AG04449 (cell line): ENCODE measurements at regions of chr5 and their contacts with region 1.

Region 1: DNA sequence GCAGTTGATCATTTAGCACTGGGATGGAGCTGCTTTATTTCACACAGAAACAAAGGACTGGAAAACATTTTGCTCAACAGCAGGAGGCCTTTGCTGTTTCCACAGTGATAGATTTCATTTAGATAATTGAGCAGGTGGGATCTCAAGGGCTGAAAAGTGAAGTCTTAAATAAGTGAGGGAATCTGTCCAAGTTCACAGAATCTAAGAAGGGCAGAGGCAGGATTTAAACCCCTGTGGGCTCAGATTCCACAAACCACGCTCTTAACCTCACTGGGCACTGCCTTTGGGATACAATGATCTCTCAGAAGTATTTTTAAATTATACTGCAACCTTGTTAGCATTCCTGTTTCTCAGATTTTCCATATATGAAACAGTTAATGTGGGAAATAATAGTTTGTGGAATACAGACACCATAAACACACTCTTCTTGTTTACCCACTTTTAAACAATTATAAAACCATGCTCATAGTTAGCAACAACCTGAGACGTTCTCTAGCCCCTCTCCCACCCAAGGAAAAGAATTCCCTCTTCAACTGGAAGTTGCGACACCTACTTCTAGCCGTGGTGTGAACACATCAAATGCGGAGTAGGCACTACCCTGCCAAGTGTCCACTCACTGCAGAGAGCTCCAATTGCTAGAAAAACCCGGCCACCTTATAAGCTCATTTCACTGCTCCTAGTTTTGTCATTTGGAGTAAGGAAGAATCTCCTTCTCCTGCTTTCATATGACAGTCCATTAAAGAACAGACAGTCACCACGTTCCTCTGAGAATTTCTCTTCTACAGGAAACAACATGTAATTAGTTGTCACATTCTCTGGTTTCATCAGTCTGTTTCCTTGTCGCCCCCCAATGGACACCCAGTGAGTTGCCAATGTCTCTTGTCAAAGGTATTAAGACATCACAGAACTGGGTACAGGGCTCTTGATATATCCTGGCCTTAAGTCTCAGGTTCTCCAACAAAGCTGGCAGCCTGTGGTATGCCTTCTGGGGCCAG is 47.4 kb downstream of the PRLR start:
- DNase-seq: no peak
- H3K4me3 ChIP-seq: no peak overlapping the region
- CTCF ChIP-seq: peak; percentile 64

Region 2: DNA sequence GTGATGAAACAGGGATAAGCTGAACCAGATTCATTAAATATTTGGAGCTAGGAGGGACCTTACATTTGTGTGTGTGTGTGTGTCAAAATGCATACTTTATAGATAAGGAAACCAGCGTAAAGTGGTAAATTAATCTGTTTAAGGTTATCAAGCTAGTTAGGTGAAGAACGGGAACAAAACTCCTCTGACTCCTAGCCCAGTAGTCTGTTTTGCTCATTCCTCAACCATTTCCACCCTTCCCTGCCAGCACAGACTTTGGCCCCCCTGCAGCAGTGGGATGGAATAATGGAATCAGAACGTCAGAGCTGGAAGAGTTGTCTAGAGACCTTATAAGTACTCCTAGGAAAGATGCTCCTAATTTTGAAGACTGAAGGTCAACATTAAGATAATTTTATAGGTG is 141.6 kb before region 1 on chr5:
- CTCF ChIA-PET with region 1: no interaction called
- POLR2A ChIA-PET with region 1: no interaction called
- DNase-seq: no peak
- H3K4me3 ChIP-seq: no peak overlapping the region
- CTCF ChIP-seq: no peak

Region 3: DNA sequence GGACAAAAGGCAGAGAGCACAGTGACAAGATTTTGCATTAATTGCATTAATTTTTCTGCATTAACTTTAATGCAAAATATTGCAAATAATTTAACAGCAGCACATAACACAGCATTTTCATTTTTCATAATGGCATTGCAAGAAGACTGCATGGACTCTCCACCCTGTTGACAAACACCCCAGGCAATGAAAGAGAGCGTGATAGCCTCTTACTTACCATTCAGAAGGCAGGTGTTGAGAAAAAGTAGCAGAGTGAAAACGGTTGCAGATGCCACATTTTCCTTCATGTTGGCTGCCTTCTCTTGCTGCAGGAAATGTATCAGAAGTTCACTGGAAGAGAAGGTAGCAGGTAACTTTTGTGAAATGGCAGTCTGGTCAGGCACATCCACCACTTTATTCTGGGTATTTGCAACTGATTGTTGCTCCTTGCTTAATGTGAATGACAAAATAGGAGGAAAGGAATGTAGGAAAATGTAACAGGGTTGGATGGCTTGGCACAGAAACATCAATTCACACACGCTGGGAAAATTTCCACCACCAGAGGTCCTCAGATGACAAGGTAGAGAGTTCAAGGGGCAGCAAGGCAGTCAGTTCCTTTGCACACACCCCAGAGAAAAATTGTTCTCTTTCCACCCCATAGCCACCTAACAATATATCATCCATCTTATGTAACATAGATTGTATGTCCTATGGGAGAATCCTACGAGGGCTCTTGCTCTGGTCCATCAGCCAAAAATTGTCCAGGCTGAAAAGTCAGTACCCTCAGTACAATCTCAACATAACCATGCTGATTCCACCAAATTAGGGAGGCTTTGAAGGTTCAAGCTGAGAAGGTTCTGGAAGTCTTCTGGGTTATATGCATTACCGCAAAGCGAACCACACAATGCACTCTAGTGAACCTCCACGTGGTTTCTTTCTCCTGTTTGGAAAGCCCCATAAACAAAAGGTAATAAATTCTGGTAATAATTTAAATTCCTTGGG is 93.2 kb before region 1 on chr5:
- CTCF ChIA-PET with region 1: interaction called, 50 read pairs
- POLR2A ChIA-PET with region 1: no interaction called
- DNase-seq: no peak
- H3K4me3 ChIP-seq: no peak overlapping the region
- CTCF ChIP-seq: peak; percentile 78

Region 4: DNA sequence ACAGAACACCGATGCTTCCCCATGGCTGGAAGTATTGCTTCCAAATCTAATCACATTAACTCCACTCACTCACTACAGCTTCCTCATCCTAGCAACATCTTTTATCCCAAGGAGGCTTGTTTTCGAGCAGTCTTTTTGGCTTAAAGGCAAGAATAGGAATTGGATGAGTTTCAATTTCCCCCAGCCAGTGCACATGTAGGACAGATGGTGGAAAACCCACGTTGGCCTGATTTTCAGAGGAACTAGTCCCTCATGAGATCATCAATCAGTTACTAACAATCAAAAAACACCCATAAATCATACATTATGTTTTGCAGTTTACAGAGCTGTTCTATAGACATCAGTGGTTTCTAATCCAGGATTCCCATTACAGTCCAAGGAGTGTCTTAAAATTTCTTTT is 86.6 kb before region 1 on chr5:
- CTCF ChIA-PET with region 1: interaction called, 50 read pairs
- POLR2A ChIA-PET with region 1: no interaction called
- DNase-seq: no peak
- H3K4me3 ChIP-seq: no peak overlapping the region
- CTCF ChIP-seq: no peak

Region 5: GRCh38 chr5:35171078-35171477 is 11.8 kb before region 1 on chr5:
- CTCF ChIA-PET with region 1: interaction called, 10 read pairs
- POLR2A ChIA-PET with region 1: no interaction called
- DNase-seq: no peak
- H3K4me3 ChIP-seq: no peak overlapping the region
- CTCF ChIP-seq: no peak

Region 6: DNA sequence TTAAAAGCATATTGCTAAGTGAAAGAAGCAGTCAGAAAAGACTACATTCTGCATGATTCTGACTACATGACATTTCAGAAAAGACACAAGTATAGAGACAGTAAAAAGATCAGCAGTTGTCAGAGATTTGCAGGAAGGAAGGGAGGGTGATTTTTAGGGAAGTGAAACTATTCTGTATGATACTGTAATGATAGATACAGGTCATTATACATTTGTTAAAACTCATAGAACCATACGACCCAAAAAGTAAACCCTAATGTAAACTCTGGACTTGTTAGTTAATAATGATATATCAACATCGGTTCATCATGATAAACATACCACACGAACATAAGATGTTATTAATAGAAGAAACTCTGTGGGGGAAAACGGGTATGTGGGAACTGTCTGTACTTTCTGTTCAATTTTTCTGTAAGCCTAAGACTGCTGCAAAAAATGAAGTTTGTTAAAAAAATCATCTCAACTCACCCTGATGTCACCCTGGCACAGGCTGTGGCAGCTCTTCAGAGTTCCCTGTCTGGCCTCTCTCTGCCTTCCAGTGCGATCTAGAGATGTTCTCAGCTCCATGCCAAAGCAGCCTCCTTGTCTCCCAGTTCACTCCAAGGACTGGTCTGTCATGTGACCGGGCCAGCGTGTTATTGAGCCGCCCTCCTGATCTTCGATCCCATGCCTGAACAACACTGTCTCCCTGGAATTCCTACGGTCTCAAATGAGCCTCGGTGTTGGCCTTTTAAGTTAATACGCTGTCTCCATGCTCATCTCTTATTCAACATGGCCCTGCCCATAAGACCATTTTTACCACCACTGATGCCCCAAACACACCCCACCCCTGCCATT is 12.0 kb after region 1 on chr5:
- CTCF ChIA-PET with region 1: interaction called, 16 read pairs
- POLR2A ChIA-PET with region 1: no interaction called
- DNase-seq: no peak
- H3K4me3 ChIP-seq: no peak overlapping the region
- CTCF ChIP-seq: no peak

Region 7: DNA sequence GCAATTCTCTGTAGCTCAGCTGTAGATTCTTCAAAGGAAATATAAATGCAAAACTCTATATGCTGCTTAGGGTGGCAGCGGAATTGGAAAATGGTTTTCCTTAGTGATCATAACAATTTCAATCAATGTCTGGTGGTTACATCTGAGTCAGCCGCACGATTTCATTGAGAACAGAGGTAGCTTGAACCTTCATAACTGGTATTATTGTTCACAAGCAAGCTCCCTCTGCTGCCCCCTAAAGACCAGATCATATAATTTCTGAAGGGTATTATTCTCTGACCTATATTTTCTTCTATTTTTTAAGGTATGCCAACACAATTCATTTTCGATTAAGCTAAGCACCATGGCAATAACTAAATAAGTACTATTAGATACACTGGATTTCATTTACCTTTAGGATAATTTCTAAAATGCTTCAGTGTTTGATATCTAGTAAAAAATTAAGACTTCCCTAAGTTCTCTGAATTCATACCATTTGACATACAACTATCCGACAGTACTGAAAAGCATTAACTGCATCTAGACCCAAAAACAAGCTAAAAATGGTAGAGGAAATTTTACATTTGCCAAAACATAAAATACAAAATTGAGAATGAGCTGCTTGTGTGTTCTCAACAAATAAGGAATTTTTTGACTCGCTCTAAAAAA is 253.7 kb after region 1 on chr5:
- CTCF ChIA-PET with region 1: no interaction called
- POLR2A ChIA-PET with region 1: no interaction called
- DNase-seq: no peak
- H3K4me3 ChIP-seq: no peak overlapping the region
- CTCF ChIP-seq: peak; percentile 21